Right ventricle myocardium inferior (tissue), 1 donor: ENCODE measurements at regions of chr10 and their contacts with region 1.

Region 1: GRCh38 chr10:987870-988666 is at the start of gene GTPBP4:
- DNase-seq: peak; percentile 99
- ATAC-seq: peak; percentile 99
- total RNA-seq, gene GTPBP4: 29.3 TPM

Region 2: DNA sequence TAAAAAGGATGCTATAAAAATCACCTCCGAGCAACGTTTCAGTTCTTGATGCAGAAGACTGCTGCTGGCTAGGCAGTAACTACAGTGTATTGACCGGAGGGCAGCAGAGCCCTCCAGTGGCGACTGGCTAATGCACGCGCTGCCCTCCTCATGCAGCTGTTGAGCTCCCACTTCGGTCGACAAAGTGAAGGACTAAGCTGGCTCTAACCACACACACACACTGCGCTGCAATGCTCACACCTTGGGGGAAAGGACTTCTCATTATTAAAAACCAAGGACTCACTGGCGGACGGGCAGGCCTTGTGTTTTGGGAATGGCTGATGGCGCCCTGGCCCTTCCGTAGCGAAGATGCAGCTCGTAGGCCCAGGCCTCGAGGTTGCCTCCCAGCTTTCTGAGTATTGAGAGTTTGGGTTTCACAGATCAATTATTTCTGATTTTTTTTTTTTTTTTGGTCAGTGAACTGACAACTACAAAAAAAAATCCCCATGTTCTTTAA is 177.7 kb before region 1 on chr10:
- intact Hi-C with region 1: loop called (anchors 10 kb)
- DNase-seq: no peak
- ATAC-seq: peak; percentile 45

Region 3: DNA sequence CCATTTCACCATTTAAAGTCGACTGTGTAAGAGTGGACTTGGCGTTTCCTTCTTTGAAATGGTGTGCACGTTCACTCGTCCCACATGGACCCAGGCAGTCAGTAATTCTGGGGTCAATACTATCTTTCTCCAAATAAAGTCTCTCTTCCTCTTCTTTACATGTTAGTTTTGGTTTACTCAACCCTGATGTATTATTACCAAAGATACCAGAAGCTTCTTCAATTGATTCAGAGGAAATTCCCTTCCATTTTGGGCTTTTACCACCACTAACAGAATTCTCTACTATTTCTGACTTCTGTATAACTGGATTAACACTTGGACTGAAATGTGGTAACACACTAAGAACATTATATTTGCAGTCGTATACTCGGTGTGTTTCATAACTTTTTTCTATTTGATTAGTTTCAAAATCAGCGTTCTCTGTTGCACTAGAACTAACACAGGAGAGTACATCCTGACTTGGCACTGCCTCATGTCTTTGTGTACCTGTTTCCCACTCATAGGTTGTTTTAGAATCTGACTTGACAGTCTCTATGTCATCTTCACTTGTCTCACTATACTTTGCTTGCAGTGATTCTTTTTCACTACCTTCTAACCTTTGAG is 117.4 kb before region 1 on chr10:
- intact Hi-C with region 1: loop called (anchors 5 kb)
- DNase-seq: no peak
- ATAC-seq: no peak

Region 4: GRCh38 chr10:931416-932318 is 56.4 kb before region 1 on chr10 and contains the start of gene LARP4B:
- intact Hi-C with region 1: loop called (anchors 2 kb)
- DNase-seq: peak; percentile 99
- ATAC-seq: peak; percentile 100
- total RNA-seq, gene LARP4B: 58.9 TPM

Region 5: DNA sequence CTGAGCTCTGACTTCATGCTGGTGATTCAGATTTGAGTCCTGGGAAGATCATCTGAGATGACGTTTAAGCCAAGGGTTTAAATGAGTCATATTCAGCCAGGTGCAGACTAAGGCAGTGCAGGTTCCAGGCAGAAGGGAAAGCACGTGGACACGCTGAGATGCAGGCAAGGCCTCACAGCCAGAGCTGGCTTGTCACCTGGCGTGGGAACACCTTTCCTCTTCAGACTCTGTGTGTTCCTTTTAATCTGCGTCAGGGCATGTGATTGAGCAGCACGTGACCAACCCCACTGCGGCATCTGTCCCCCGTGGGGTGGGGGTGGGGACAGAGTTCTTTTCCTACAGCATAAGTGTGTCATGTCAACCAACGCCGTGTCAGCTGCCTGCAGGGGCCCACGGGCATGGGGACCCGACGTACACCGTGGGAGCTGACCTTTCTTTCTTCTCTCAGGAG is 48.3 kb after region 1 on chr10:
- intact Hi-C with region 1: no loop called
- DNase-seq: no peak
- ATAC-seq: no peak

Region 6: GRCh38 chr10:1048732-1049424 is 60.8 kb after region 1 on chr10 and contains the start of gene IDI1:
- intact Hi-C with region 1: loop called (anchors 2 kb)
- DNase-seq: peak; percentile 99
- ATAC-seq: peak; percentile 97
- total RNA-seq, gene IDI1: 14.6 TPM